Naive thymus-derived CD8-positive, alpha-beta T cell (primary cell): ENCODE measurements at regions of chr4 and their contacts with region 1.

Region 1: DNA sequence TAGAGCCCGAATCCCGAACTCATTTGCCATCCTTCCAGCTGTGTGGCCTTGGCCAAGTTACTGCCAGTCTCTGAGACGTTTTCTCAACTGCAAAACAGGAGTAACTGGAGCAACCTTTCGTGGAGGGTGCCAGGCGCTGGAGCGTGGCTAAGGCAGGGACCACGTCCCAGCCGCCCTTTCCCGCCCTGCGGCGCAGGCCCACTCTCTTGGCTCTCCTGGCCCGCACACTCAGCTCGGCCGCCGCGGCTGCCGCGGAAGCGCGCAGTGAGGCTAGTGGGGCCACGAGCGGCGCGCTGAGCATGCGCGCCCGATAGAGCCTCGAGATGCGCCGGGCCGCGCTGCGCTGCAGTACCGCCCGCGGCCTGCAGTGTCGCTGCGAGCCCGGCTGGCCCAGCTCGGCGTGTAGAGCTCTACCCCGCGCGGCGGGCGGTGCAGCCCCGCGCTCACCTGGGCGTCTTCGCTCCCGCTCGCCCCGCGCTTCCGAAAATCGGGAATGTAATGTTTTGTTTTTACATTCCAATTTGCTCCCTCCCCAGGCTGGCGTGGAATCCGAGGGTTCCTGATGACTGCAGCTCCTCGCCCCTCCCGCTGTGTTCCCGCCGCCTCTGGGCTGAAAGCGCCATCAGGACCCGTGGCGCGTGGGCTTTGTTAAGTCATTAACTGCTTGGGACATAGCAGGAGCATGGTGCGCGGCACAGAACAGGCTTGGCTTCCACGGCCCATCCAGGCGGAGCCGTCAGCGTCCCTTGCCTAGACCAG is 4.0 kb upstream of the ZNF518B start:
- DNase-seq: peak; percentile 59 to 85 (median 78)
- ATAC-seq: peak; percentile 70 to 73
- H3K4me3 Mint-ChIP-seq: peak overlapping the region; percentile 74 to 91 (median 82)
- H3K27ac Mint-ChIP-seq: peak overlapping the region in 5 of 10 donors; percentile 13 to 77 (median 73)
- H3K4me1 Mint-ChIP-seq: peaks cover 5 to 38% (median 28%) of the 10 kb centered on the region in 4 donors
- H3K27me3 Mint-ChIP-seq: peaks cover 18 to 42% (median 33%) of the 10 kb centered on the region in 5 donors

Region 2: GRCh38 chr4:10413177-10413576 is 48.1 kb before region 1 on chr4:
- POLR2A ChIA-PET with region 1: interaction called, 30 read pairs
- DNase-seq: no peak
- ATAC-seq: no peak
- H3K4me3 Mint-ChIP-seq: no peak overlapping the region
- H3K27ac Mint-ChIP-seq: peak overlapping the region in 6 of 10 donors; percentile 2 to 79 (median 24)
- H3K4me1 Mint-ChIP-seq: peaks cover 25 to 45% (median 40%) of the 10 kb centered on the region in 4 donors
- H3K27me3 Mint-ChIP-seq: no peaks in the 10 kb centered on the region

Region 3: DNA sequence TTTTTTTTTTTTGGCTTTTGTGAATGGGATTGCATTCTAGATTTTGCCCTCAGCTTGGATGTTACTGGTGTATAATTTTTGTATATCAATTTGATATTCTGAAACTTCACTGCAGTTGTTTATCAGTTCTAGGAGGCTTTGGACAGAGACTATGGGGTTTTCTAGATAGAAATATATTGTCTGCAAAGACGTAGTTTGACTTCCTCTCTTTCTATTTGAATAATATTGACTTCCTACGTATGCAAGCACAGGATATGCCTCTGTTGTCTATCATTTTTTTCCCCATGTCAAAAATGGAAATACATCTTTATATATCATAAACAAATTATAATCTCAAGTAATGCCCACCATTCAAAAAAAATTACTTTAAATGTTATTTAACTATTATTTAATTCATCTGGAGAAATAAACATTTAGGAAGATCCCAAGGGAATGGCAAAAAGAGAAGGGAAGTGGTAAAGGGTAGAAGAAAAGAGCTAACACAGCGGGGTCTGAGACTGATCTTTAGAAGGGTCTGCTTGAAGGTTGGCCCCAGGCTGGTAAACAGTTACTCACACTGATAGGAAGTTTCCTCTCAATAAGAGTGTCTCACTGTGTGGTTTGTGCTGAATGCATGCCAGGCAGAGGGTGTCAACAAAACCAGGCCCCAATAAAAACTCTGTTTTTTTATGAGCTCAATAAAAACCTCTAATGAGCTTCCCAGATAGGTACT is 39.8 kb before region 1 on chr4:
- POLR2A ChIA-PET with region 1: interaction called, 30 read pairs
- DNase-seq: peak in 7 of 10 donors; percentile 2 to 63 (median 52)
- ATAC-seq: peak; percentile 81 to 85
- H3K4me3 Mint-ChIP-seq: peak overlapping the region in 9 of 10 donors; percentile 7 to 80 (median 70)
- H3K27ac Mint-ChIP-seq: peak overlapping the region; percentile 75 to 98 (median 94)
- H3K4me1 Mint-ChIP-seq: peaks cover 20 to 33% (median 26%) of the 10 kb centered on the region in 4 donors
- H3K27me3 Mint-ChIP-seq: no peaks in the 10 kb centered on the region

Region 4: DNA sequence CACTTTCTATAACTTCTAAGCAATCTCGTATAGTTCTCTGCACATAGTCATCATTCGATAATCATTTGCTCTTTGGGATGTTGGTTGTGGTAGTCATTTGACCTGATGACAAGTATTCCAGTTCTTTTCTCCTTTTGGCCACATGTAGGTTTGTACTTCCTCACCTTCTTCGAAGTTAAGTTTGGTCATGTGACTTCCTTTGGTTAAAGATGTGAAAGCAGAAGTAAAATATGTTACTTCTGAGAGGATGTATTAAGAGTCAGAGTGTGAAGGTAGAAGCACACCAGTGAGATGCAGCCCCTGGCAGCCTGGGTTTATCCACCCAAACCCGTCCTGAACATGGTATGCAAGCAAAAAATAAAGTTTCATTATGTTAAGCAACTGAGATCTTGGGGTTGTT is 44.8 kb after region 1 on chr4:
- POLR2A ChIA-PET with region 1: no interaction called
- DNase-seq: no peak
- ATAC-seq: no peak
- H3K4me3 Mint-ChIP-seq: no peak overlapping the region
- H3K27ac Mint-ChIP-seq: peak overlapping the region in 1 of 10 donors; percentile 40
- H3K4me1 Mint-ChIP-seq: peaks cover 0 to 6% (median 2%) of the 10 kb centered on the region in 4 donors
- H3K27me3 Mint-ChIP-seq: peaks cover 0 to 2% (median 0%) of the 10 kb centered on the region in 5 donors